Activated CD4-positive, alpha-beta T cell treated with anti-CD3 and anti-CD28 coated beads, Interleukin-2, amount 10 ng/mL, durations not matched to agents 24 days and 14 days (primary cell): ENCODE measurements at regions of chr7 and their contacts with region 1.

Region 1: DNA sequence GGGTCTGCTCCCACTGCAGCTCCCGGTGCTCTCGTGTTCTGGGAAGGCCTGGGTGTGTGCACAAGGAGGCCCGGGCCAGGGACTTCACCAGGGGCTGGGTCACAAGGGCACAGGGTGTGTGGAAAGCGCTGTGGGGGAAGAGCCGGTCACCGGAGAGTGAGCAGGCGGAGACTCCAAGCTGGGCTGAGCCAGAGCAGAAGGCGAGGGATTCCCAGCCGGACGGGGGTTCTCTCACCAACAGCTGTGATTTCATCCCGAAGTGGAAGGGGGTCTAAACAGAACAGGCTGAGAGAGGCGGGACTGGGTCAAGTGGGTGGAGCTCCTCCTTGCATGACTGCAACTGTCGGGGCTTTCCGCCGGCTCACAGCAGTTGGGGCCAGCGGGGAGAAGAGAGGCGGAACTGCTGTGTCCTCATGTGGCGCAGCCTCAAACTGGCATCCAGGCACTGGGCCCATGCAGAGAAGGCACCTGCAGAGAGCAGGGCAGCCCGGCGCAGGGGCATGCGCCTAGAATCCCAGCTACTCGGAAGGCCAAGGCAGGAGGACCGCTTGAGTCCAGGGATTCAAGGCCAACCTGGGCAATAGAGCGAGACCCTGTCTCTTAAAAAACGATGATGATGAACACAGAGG is 7.6 kb upstream of the ORAI2 start:
- DNase-seq: peak; percentile 95
- H3K4me3 Mint-ChIP-seq: peak overlapping the region; percentile 93
- H3K27ac Mint-ChIP-seq: peak overlapping the region; percentile 100
- H3K4me1 Mint-ChIP-seq: peaks cover 60% of the 10 kb centered on the region
- H3K27me3 Mint-ChIP-seq: no peaks in the 10 kb centered on the region

Region 2: GRCh38 chr7:102376964-102377466 is 48.7 kb before region 1 on chr7:
- intact Hi-C with region 1: no loop called
- DNase-seq: peak; percentile 35
- H3K4me3 Mint-ChIP-seq: no peak overlapping the region
- H3K27ac Mint-ChIP-seq: no peak overlapping the region
- H3K4me1 Mint-ChIP-seq: peaks cover 6% of the 10 kb centered on the region
- H3K27me3 Mint-ChIP-seq: no peaks in the 10 kb centered on the region

Region 3: DNA sequence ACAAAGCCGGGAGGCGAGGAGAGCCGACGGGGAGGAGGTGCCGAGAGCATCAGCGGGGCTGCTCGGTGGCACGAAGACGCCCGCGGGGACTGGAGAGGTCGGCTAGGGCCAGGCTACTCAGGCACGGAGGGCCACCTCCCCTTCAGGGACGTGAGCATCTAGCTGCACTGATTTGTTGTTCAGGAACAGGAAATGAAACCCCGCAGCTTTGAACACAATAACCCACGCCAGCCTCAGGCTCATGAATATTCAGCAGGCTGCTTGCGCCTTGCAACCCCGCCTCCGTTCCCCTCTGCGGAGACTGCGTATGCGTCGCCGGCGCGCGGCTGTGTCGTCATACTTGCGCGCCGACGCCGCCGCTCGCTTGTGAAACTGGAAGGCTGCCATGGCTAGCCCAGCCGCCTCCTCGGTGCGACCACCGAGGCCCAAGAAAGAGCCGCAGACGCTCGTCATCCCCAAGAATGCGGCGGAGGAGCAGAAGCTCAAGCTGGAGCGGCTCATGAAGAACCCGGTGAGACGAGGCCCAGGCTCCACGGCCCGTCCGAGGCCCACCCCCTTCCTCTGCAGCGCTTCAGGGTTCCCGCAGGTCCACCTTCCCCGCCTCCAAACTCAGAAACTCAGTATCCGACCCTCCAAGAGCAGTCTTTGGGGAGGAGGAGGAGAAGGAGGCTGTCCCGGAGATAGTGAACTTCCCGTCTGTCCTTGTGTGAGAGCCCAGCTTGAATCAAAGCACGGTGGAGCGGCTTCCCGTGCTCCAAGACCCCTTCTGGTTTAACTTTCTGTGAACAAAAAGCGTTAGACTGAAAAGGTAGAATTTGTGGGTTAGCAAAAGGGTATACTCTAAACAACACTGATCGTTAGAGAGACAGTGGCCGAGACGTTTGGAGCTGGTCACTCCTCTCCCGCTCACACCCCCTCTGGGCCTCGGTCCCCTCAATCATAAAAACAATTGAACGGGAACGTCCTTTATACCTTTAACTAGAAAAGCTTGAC is 29.4 kb before region 1 on chr7 and contains the start of gene PRKRIP1:
- intact Hi-C with region 1: loop called (anchors 1 kb)
- DNase-seq: peak; percentile 95
- H3K4me3 Mint-ChIP-seq: peak within 1 kb of the TSS; percentile 92
- H3K27ac Mint-ChIP-seq: peak within 1 kb of the TSS; percentile 87
- H3K4me1 Mint-ChIP-seq: peaks cover 13% of the 10 kb centered on the region
- H3K27me3 Mint-ChIP-seq: no peaks in the 10 kb centered on the region
- total RNA-seq, gene PRKRIP1: 26.4 and 31.7 TPM in 2 replicates

Region 4: DNA sequence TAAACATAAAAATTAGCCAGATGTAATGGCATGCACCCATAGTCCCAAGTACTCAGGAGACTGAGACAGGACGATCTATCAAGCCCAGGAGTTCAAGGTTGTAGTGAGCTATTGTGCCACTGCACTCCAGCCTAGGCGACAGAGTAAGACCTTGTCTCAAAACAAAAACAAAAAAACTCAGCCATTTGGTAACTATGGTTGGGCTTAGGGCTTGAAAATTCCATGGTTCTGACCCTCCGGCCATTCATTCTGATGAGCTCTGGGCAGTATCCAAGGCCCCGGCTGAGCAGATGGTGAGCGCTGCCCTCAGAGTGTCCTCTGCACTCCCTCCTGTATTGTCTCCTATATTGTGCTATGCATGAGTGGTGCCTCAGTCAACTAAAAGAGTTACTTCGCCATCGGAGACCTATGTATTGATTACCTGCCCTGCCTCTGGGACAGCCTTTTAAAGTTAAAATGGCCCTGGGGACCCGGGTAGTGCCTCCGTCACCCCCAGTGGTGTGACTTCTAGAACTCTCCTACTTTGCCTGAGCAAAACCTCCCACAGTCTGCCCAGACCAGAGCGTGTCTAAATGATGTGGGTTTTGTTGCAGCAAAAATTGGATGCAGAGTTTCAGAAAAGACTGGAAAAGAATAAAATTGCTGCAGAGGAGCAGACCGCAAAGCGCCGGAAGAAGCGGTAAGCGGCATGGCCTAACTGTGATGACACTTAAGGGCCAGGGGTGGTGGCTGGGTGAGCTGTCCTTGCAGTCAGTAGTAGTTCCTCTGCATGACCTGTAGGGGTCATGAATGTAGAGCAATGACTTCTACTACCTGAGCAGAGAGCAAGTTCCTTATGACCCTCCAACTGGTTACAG is 21.5 kb before region 1 on chr7:
- intact Hi-C with region 1: loop called (anchors 2 kb)
- DNase-seq: peak; percentile 84
- H3K4me3 Mint-ChIP-seq: no peak overlapping the region
- H3K27ac Mint-ChIP-seq: peak overlapping the region; percentile 41
- H3K4me1 Mint-ChIP-seq: peaks cover 10% of the 10 kb centered on the region
- H3K27me3 Mint-ChIP-seq: no peaks in the 10 kb centered on the region

Region 5: GRCh38 chr7:102412548-102412947 is 13.2 kb before region 1 on chr7:
- intact Hi-C with region 1: loop called (anchors 1 kb)
- DNase-seq: peak; percentile 87
- H3K4me3 Mint-ChIP-seq: no peak overlapping the region
- H3K27ac Mint-ChIP-seq: no peak overlapping the region
- H3K4me1 Mint-ChIP-seq: peaks cover 38% of the 10 kb centered on the region
- H3K27me3 Mint-ChIP-seq: no peaks in the 10 kb centered on the region

Region 6: DNA sequence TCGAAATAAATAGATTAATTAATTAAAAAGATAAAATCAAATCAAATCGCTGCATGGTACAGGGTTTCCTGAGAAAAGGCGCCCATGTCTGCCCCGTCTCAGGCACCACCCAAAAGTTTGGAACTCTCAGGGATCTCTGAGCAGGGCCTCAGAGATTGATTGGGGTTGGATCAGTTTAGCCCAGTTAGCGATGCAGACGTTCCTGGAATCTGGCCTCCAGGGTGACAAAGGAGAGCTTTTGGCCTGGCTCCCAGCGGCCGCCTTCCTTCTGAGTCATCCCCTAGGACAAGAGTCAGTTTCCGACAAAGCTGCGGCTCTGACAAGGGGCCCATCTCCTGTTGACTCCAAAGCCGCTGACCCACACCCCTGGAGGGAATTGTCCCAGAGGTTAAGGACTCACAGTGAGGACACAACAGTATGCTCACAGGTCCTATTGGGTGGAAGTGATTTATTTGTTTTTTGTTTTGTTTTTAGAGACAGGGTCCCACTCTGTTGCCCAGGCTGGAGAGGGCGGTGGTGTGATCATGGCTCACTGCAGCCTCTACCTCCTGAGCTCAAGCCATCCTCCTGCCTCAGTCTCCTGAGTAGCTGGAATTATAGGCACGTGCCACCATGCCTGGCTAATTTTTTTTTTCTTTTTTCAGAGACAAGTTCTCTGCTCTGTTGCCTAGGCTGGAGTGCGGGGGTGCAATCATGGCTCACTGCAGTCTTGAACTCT is 14.5 kb after region 1 on chr7:
- intact Hi-C with region 1: no loop called
- DNase-seq: no peak
- H3K4me3 Mint-ChIP-seq: no peak overlapping the region
- H3K27ac Mint-ChIP-seq: no peak overlapping the region
- H3K4me1 Mint-ChIP-seq: peaks cover 10% of the 10 kb centered on the region
- H3K27me3 Mint-ChIP-seq: no peaks in the 10 kb centered on the region

Region 7: GRCh38 chr7:102464577-102465280 is 39.0 kb after region 1 on chr7 and contains the starts of genes ALKBH4 and LRWD1:
- intact Hi-C with region 1: loop called (anchors 2 kb)
- DNase-seq: peak; percentile 99
- H3K4me3 Mint-ChIP-seq: peak within 1 kb of the TSS; percentile 95
- H3K27ac Mint-ChIP-seq: peak within 1 kb of the TSS; percentile 85
- H3K4me1 Mint-ChIP-seq: peaks cover 24% of the 10 kb centered on the region
- H3K27me3 Mint-ChIP-seq: no peaks in the 10 kb centered on the region
- total RNA-seq, gene ALKBH4: 9.9 and 10.9 TPM in 2 replicates
- total RNA-seq, gene LRWD1: 30.5 and 32.4 TPM in 2 replicates